Mammary epithelial cell (primary cell): ENCODE measurements at regions of chr20 and their contacts with region 1.

Region 1: DNA sequence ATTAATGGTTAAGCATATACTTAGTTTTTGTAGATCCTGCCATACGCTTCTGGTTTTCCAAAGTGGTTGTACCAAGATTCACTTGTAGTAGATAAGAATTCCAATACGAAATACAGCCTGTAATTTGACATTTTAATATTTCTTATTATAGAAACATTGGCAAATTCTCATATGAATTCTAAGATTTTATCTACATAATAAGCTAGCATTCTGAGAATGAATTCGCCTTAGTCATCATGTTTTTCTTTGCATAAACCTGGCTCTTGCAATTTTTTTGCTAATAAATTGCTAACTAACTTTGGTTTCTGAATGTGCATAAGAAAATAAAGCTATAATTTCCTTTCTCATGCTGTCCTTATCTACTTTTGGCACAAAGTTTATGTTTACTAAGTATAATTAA is 673.0 kb downstream of the PTPRT start:
- DNase-seq: no peak
- H3K4me3 ChIP-seq: no peak overlapping the region
- H3K27ac ChIP-seq: no peak overlapping the region
- H3K4me1 ChIP-seq: no peaks in the 10 kb centered on the region
- H3K27me3 ChIP-seq: no peaks in the 10 kb centered on the region
- CTCF ChIP-seq: no peak

Region 2: GRCh38 chr20:42150225-42150624 is 366.4 kb before region 1 on chr20:
- CTCF ChIA-PET with region 1: no interaction called
- dilution Hi-C with region 1: no loop called
- in situ Hi-C with region 1: no loop called
- intact Hi-C with region 1: no loop called
- DNase-seq: no peak
- H3K4me3 ChIP-seq: no peak overlapping the region
- H3K27ac ChIP-seq: no peak overlapping the region
- H3K4me1 ChIP-seq: no peaks in the 10 kb centered on the region
- H3K27me3 ChIP-seq: no peaks in the 10 kb centered on the region
- CTCF ChIP-seq: no peak

Region 3: GRCh38 chr20:42553337-42553736 is 36.7 kb after region 1 on chr20:
- CTCF ChIA-PET with region 1: no interaction called
- dilution Hi-C with region 1: loop called (anchors 5 kb)
- in situ Hi-C with region 1: no loop called
- intact Hi-C with region 1: no loop called
- DNase-seq: no peak
- H3K4me3 ChIP-seq: no peak overlapping the region
- H3K27ac ChIP-seq: no peak overlapping the region
- H3K4me1 ChIP-seq: no peaks in the 10 kb centered on the region
- H3K27me3 ChIP-seq: no peaks in the 10 kb centered on the region
- CTCF ChIP-seq: no peak

Region 4: GRCh38 chr20:42949950-42950349 is 433.3 kb after region 1 on chr20:
- CTCF ChIA-PET with region 1: no interaction called
- dilution Hi-C with region 1: no loop called
- in situ Hi-C with region 1: no loop called
- intact Hi-C with region 1: no loop called
- DNase-seq: no peak
- H3K4me3 ChIP-seq: no peak overlapping the region
- H3K27ac ChIP-seq: no peak overlapping the region
- H3K4me1 ChIP-seq: no peaks in the 10 kb centered on the region
- H3K27me3 ChIP-seq: no peaks in the 10 kb centered on the region
- CTCF ChIP-seq: no peak